H1 (cell line): ENCODE measurements at regions of chr10 and their contacts with region 1.

Region 1: GRCh38 chr10:34637418-34637911 is 177.6 kb downstream of the PARD3 start:
- DNase-seq: peak; percentile 62 to 98
- H3K4me3 ChIP-seq: no peak overlapping the region
- H3K27ac ChIP-seq: no peak overlapping the region
- H3K4me1 ChIP-seq: peaks cover 5 to 15% (median 11%) of the 10 kb centered on the region in 4 experiments; a peak in 5 of 7 replicates
- H3K27me3 ChIP-seq: no peaks in the 10 kb centered on the region
- CTCF ChIP-seq: peak; percentile 88 to 98 (median 95)
- EP300 ChIP-seq: peak in 1 of 2 experiments; percentile 66; a peak in 1 of 3 replicates
- POLR2A ChIP-seq: no peak
- RAD21 ChIP-seq: peak; percentile 91 to 92

Region 2: GRCh38 chr10:34522546-34522945 is 114.9 kb before region 1 on chr10:
- CTCF ChIA-PET with region 1: interaction called, 57 read pairs
- POLR2A ChIA-PET with region 1: no interaction called
- DNase-seq: no peak
- H3K4me3 ChIP-seq: no peak overlapping the region
- H3K27ac ChIP-seq: no peak overlapping the region
- H3K4me1 ChIP-seq: peaks cover 3 to 12% (median 10%) of the 10 kb centered on the region in 4 experiments; a peak in 5 of 7 replicates
- H3K27me3 ChIP-seq: no peaks in the 10 kb centered on the region
- CTCF ChIP-seq: peak in 2 of 3 experiments; percentile 15 to 27; a peak in 2 of 4 replicates
- EP300 ChIP-seq: no peak
- POLR2A ChIP-seq: no peak
- RAD21 ChIP-seq: peak; percentile 31 to 52

Region 3: DNA sequence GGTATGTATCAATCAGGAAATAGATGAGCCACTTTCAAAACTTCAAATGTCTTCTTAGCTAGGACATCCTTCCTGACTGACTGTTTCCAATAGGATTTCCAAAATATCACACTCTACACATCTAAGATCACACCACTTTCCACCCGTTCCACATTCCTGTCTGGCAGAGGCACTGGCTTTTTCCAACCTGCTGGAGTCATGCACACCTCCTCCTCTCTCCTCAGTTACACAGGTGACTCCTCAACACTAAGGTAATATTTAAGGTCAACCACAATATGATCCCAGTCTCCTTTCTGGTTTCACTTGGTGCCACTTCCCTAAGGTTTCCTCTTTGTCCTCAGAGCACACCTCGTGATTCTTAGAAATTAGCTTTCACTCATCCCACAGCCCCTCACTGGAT is 18.9 kb before region 1 on chr10:
- CTCF ChIA-PET with region 1: interaction called, 18 read pairs
- POLR2A ChIA-PET with region 1: no interaction called
- DNase-seq: no peak
- H3K4me3 ChIP-seq: no peak overlapping the region
- H3K27ac ChIP-seq: no peak overlapping the region
- H3K4me1 ChIP-seq: peaks cover 0 to 6% (median 2%) of the 10 kb centered on the region in 4 experiments; a peak in 2 of 7 replicates
- H3K27me3 ChIP-seq: no peaks in the 10 kb centered on the region
- CTCF ChIP-seq: no peak
- EP300 ChIP-seq: no peak
- POLR2A ChIP-seq: no peak
- RAD21 ChIP-seq: no peak

Region 4: GRCh38 chr10:34624323-34625153 is 12.9 kb before region 1 on chr10:
- CTCF ChIA-PET with region 1: interaction called, 18 read pairs
- POLR2A ChIA-PET with region 1: no interaction called
- DNase-seq: no peak
- H3K4me3 ChIP-seq: no peak overlapping the region
- H3K27ac ChIP-seq: no peak overlapping the region
- H3K4me1 ChIP-seq: peaks cover 0 to 5% (median under 1%) of the 10 kb centered on the region in 4 experiments; a peak in 1 of 7 replicates
- H3K27me3 ChIP-seq: no peaks in the 10 kb centered on the region
- CTCF ChIP-seq: no peak
- EP300 ChIP-seq: no peak
- POLR2A ChIP-seq: no peak
- RAD21 ChIP-seq: no peak

Region 5: DNA sequence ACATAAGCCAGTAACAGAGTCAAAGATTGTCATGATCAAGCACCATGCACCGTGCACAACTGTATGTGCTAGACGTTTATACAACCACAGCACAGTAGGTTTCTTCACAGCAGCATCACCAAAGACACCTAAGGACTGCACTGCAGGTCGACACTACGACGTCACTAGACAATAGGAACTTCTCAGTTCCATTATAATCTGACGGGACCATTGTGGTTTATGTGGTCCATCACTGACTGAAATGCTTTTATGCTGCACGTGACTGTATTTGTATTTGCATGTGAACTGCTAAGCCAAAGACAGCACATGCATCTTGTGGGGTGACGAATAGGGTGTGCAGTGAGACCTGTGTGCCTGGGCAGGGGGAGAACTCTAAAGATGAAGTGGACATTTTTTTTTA is 12.7 kb after region 1 on chr10:
- CTCF ChIA-PET with region 1: interaction called, 26 read pairs
- POLR2A ChIA-PET with region 1: no interaction called
- DNase-seq: no peak
- H3K4me3 ChIP-seq: no peak overlapping the region
- H3K27ac ChIP-seq: no peak overlapping the region
- H3K4me1 ChIP-seq: peaks cover 8 to 26% (median 22%) of the 10 kb centered on the region in 4 experiments
- H3K27me3 ChIP-seq: no peaks in the 10 kb centered on the region
- CTCF ChIP-seq: no peak
- EP300 ChIP-seq: no peak
- POLR2A ChIP-seq: no peak
- RAD21 ChIP-seq: no peak

Region 6: GRCh38 chr10:34655286-34656170 is 18.1 kb after region 1 on chr10:
- CTCF ChIA-PET with region 1: interaction called, 16 read pairs
- POLR2A ChIA-PET with region 1: no interaction called
- DNase-seq: peak; percentile 62 to 74
- H3K4me3 ChIP-seq: no peak overlapping the region
- H3K27ac ChIP-seq: no peak overlapping the region
- H3K4me1 ChIP-seq: peaks cover 10 to 37% (median 20%) of the 10 kb centered on the region in 4 experiments
- H3K27me3 ChIP-seq: no peaks in the 10 kb centered on the region
- CTCF ChIP-seq: peak in 2 of 3 experiments; percentile 51 to 77; a peak in 2 of 4 replicates
- EP300 ChIP-seq: no peak
- POLR2A ChIP-seq: no peak
- RAD21 ChIP-seq: peak; percentile 57

Region 7: GRCh38 chr10:34670081-34670480 is 32.6 kb after region 1 on chr10:
- CTCF ChIA-PET with region 1: no interaction called
- POLR2A ChIA-PET with region 1: no interaction called
- DNase-seq: no peak
- H3K4me3 ChIP-seq: no peak overlapping the region
- H3K27ac ChIP-seq: no peak overlapping the region
- H3K4me1 ChIP-seq: peaks cover 0 to 5% (median under 1%) of the 10 kb centered on the region in 4 experiments; a peak in 2 of 7 replicates
- H3K27me3 ChIP-seq: no peaks in the 10 kb centered on the region
- CTCF ChIP-seq: no peak
- EP300 ChIP-seq: no peak
- POLR2A ChIP-seq: no peak
- RAD21 ChIP-seq: no peak